Heart right ventricle (tissue), 16 donors: ENCODE measurements at regions of chr11 and their contacts with region 1.

Region 1: GRCh38 chr11:94128746-94129511 is at the start of gene PANX1:
- DNase-seq: peak; percentile 75 to 82
- ATAC-seq: peak; percentile 85 to 96 (median 91)
- H3K4me3 ChIP-seq: peak within 1 kb of the TSS; percentile 57 to 90 (median 84)
- H3K27ac ChIP-seq: peak within 1 kb of the TSS; percentile 84 to 98 (median 94)
- H3K4me1 ChIP-seq: peaks cover 6 to 56% (median 53%) of the 10 kb centered on the region in 9 donors
- H3K27me3 ChIP-seq: no peaks in the 10 kb centered on the region
- CTCF ChIP-seq: peak in 2 of 9 donors; percentile 6 to 16
- total RNA-seq, gene PANX1: 16.1 to 42.4 (median 22.0) TPM

Region 2: DNA sequence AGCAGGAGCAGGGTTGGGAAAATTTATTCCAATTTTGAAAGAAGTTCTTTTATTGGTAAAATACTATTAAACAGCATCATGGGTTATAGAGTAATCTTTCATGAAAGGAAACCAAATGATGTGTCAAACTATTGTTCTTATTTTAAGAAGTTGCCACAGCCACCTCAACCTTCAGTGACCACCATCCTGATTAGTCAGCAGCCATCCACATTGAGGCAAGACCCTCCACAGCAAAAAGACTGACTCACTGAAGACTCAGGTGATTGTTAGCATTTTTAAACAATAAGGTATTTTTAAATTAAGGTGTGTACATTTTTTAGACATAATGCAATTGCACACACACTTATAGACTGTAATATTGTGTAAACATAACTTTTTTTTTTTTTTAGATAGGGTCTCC is 111.5 kb before region 1 on chr11:
- intact Hi-C with region 1: no loop called
- DNase-seq: no peak
- ATAC-seq: no peak
- H3K4me3 ChIP-seq: no peak overlapping the region
- H3K27ac ChIP-seq: no peak overlapping the region
- H3K4me1 ChIP-seq: no peaks in the 10 kb centered on the region
- H3K27me3 ChIP-seq: no peaks in the 10 kb centered on the region
- CTCF ChIP-seq: no peak

Region 3: GRCh38 chr11:94107363-94107762 is 21.6 kb before region 1 on chr11:
- intact Hi-C with region 1: loop called in 1 of 10 experiments (anchors 2 kb)
- DNase-seq: no peak
- ATAC-seq: no peak
- H3K4me3 ChIP-seq: no peak overlapping the region
- H3K27ac ChIP-seq: no peak overlapping the region
- H3K4me1 ChIP-seq: peaks cover 0 to 14% (median 0%) of the 10 kb centered on the region in 9 donors
- H3K27me3 ChIP-seq: no peaks in the 10 kb centered on the region
- CTCF ChIP-seq: no peak

Region 4: GRCh38 chr11:94141511-94142307 is 12.8 kb after region 1 on chr11:
- intact Hi-C with region 1: no loop called
- DNase-seq: no peak
- ATAC-seq: peak in 7 of 8 donors; percentile 7 to 48 (median 27)
- H3K4me3 ChIP-seq: no peak overlapping the region
- H3K27ac ChIP-seq: peak overlapping the region in 1 of 10 donors; percentile 24
- H3K4me1 ChIP-seq: peaks cover 10 to 88% (median 55%) of the 10 kb centered on the region in 9 donors
- H3K27me3 ChIP-seq: no peaks in the 10 kb centered on the region
- CTCF ChIP-seq: no peak

Region 5: DNA sequence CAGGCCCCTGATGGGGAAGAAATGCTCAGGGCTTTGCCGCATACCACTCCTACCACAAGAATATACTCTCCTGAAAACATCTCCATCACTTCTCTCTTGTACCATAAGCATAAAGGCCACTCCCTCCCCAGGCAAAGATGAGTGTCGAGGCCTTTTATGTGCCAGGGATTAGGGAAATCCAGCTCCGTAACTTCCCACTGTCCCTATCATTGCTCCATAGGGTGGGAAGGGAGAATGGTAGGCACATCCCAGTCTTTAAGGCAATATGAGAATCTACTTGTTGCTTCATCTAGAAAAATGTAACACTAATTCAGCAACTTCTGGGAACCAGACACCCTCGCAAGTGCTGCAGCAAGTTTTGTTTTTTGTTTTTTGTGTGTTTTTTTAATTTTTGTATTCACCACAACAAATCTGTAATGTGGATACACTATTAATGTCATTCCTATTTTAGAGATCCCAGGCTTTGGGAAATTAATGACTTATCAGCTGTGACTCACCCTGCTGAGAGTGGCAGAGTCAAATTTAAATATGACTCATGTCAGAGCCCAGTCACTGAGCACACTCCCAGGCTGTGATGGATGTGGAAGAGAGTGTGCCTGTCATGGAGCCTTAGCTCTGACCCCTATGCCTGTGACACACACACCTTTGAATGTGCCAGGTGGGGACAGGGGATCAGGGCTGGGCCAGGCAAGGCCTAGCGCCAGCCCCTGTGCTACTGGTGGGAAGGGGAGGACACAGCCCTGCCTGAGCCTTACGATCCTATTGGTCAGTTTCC is 23.2 kb after region 1 on chr11:
- intact Hi-C with region 1: loop called in 1 of 10 experiments (anchors 2 kb)
- DNase-seq: peak in 1 of 2 donors; percentile 40
- ATAC-seq: peak; percentile 92 to 99 (median 98)
- H3K4me3 ChIP-seq: no peak overlapping the region
- H3K27ac ChIP-seq: peak overlapping the region; percentile 24 to 86 (median 71)
- H3K4me1 ChIP-seq: peaks cover 15 to 68% (median 55%) of the 10 kb centered on the region in 9 donors
- H3K27me3 ChIP-seq: no peaks in the 10 kb centered on the region
- CTCF ChIP-seq: no peak

Region 6: GRCh38 chr11:94219771-94220170 is 90.8 kb after region 1 on chr11:
- intact Hi-C with region 1: no loop called
- DNase-seq: no peak
- ATAC-seq: no peak
- H3K4me3 ChIP-seq: no peak overlapping the region
- H3K27ac ChIP-seq: no peak overlapping the region
- H3K4me1 ChIP-seq: no peaks in the 10 kb centered on the region
- H3K27me3 ChIP-seq: no peaks in the 10 kb centered on the region
- CTCF ChIP-seq: no peak